Activated CD4-positive, alpha-beta T cell treated with anti-CD3 and anti-CD28 coated beads, Interleukin-2, amount 10 ng/mL, durations not matched to agents 24 days and 14 days (primary cell): ENCODE measurements at regions of chr3 and their contacts with region 1.

Region 1: GRCh38 chr3:45037734-45038455 is 11.8 kb downstream of the CLEC3B start:
- DNase-seq: peak; percentile 97
- H3K4me3 Mint-ChIP-seq: peak overlapping the region; percentile 34
- H3K27ac Mint-ChIP-seq: no peak overlapping the region
- H3K4me1 Mint-ChIP-seq: peaks cover 45% of the 10 kb centered on the region
- H3K27me3 Mint-ChIP-seq: peaks cover 28% of the 10 kb centered on the region

Region 2: GRCh38 chr3:44529927-44530326 is 508.0 kb before region 1 on chr3:
- intact Hi-C with region 1: loop called (anchors 2 kb)
- DNase-seq: peak; percentile 72
- H3K4me3 Mint-ChIP-seq: no peak overlapping the region
- H3K27ac Mint-ChIP-seq: no peak overlapping the region
- H3K4me1 Mint-ChIP-seq: peaks cover 2% of the 10 kb centered on the region
- H3K27me3 Mint-ChIP-seq: peaks cover 9% of the 10 kb centered on the region

Region 3: DNA sequence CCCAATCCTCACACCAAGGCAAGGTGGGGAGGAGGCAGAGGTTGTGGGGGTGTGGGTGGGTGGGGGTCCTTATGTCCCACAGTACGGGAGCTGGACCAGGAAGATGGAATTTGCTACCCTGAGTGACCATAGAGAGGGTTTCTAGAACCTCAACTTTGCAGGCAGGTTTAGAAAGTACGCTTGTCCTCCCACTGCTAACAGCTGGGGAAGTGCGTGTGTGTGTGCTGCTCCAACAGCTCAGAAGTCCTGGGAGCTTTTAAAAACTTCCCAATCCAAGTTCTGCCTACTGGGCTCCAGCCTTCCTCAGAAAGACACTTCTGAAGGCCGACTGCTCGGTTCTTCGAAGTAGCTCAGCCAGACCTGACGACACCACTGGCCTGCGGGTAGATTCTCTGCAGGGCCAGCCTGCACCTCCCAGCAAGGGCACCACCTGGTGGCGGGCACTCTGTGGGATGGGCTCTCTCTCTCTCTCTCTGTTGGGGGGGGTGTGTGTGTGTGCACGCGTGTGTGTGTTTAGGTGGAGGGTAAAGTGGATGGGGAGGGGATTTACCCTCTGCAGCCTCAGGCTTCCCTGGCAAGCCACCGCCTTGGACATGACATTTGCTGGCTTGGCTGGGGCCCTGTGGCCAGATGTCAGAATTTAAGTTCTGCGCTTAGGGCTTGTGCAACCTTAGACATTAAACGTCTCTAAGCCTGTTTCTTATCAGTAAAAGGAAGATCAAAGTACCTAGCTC is 172.6 kb after region 1 on chr3:
- intact Hi-C with region 1: loop called (anchors 1 kb)
- DNase-seq: peak; percentile 93
- H3K4me3 Mint-ChIP-seq: no peak overlapping the region
- H3K27ac Mint-ChIP-seq: peak overlapping the region; percentile 14
- H3K4me1 Mint-ChIP-seq: peaks cover 14% of the 10 kb centered on the region
- H3K27me3 Mint-ChIP-seq: peaks cover 28% of the 10 kb centered on the region

Region 4: GRCh38 chr3:45343947-45344346 is 306.1 kb after region 1 on chr3:
- intact Hi-C with region 1: loop called (anchors 1 kb)
- DNase-seq: no peak
- H3K4me3 Mint-ChIP-seq: no peak overlapping the region
- H3K27ac Mint-ChIP-seq: no peak overlapping the region
- H3K4me1 Mint-ChIP-seq: no peaks in the 10 kb centered on the region
- H3K27me3 Mint-ChIP-seq: peaks cover 7% of the 10 kb centered on the region

Region 5: DNA sequence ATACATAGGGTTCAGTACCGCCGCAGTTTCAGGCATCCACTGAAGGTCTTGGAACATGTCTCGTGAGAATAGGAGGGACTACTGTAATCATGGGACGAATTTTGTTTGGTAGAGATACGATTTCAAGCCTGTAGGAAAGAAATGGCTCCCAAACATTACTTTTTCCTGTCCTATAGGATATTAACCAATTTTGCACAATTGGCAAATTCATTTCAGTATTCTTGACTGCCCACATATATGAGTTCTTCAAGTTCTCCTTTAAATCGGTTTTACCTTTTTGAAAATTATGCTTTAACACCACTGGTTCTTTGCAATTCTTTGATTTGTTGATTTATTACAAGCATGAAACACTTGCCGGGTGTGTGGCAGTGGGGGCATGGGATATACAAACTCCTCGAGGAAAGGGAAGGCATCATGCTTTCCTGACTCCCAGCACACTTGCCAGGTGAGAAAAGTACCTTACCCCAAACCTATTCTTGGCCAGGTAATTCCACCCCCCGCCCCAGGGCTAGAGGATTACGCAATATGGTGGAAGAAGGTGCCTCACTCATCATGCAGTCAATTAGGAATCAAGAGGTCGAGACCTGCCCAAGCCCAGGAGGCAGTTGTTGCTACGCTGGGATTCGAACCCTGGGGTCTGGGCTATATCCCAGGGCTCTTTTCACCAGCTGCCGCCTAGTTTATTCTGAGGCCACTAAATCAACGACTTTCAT is 349.9 kb after region 1 on chr3:
- intact Hi-C with region 1: loop called (anchors 1 kb)
- DNase-seq: no peak
- H3K4me3 Mint-ChIP-seq: peak overlapping the region; percentile 94
- H3K27ac Mint-ChIP-seq: peak overlapping the region; percentile 49
- H3K4me1 Mint-ChIP-seq: peaks cover 16% of the 10 kb centered on the region
- H3K27me3 Mint-ChIP-seq: peaks cover 20% of the 10 kb centered on the region

Region 6: DNA sequence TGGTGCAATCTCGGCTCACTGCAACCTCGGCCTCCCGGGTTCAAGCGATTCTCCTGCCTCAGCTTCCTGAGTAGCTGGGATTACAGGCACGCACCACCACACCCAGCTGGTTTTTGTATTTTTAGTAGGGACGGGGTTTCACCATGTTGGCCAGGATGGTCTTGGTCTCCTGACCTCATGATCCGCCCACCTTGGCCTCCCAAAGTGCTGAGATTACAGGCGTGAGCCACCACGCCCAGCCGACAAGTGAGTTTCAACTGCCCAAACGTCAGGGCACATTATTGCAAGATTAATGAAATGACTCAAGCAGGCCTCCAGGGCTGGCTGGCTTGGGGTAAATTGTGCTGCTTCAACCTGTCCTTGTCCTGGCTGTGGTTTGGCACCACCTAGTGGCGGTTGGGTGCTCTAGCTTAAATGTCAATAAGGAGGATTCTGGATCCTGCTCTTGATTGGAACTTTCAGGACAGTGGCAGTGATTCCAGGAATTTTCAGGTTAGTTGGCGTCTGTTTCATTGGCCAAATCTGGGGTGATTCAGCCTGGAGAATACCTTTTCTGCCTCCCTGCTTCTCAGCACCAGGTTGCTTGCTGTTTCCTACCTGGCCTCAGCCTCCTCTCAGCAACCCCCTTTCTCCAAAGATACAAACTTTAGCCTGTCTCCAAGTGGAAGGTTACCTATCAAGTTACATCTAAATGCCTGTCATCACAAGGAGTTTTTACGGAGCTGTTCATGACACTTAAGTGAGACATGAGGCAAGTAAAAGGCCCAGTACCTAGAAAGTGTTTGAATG is 618.9 kb after region 1 on chr3:
- intact Hi-C with region 1: loop called (anchors 1 kb)
- DNase-seq: peak; percentile 94
- H3K4me3 Mint-ChIP-seq: no peak overlapping the region
- H3K27ac Mint-ChIP-seq: no peak overlapping the region
- H3K4me1 Mint-ChIP-seq: peaks cover 13% of the 10 kb centered on the region
- H3K27me3 Mint-ChIP-seq: no peaks in the 10 kb centered on the region

Region 7: GRCh38 chr3:45929042-45929679 is 891.3 kb after region 1 on chr3:
- intact Hi-C with region 1: loop called (anchors 5 kb)
- DNase-seq: peak; percentile 90
- H3K4me3 Mint-ChIP-seq: no peak overlapping the region
- H3K27ac Mint-ChIP-seq: peak overlapping the region; percentile 43
- H3K4me1 Mint-ChIP-seq: peaks cover 5% of the 10 kb centered on the region
- H3K27me3 Mint-ChIP-seq: no peaks in the 10 kb centered on the region